Right ventricle myocardium superior (tissue), 1 donor: ENCODE measurements at regions of chr2 and their contacts with region 1.

Region 1: GRCh38 chr2:65432227-65433190 is at the start of gene SPRED2:
- DNase-seq: peak; percentile 96
- ATAC-seq: peak; percentile 68
- total RNA-seq, gene SPRED2: 14.9 TPM

Region 2: DNA sequence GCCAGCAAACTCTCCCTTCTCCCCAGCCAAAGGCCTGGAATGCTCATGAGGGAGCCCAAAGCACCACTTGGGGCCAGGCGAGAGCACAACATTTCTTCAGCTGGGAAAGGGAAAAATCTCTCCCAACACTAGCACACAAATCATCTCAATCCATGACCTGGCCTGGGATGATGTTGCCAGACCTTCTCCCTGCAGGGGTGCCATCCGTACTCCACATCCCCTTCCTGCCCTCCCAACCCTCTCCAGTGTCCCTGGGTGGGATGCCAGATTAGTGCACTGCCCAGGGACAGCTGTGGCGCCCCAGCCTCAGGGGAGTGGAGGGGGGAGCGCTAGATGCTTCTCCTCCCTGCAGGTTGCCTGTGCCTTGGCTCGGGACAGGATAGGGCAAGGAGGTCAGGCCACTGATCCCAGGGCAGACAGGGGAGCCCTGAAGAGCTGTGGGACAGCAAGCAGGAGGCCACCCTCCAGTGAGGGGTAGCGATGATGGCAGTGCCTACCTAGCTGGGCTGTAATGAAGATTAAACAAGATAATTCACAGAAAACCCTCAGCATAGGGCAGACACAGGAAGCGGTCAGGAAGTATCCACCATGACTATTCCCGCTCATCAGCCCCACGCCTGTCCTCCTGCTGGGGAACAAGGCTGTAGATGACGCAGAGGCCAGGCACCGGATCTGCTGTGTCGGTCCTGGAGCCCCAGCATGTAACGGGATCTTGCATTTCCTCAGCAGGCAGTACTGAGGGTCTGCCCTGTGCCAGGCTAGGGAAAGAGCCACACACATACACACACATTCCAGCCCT is 809.9 kb before region 1 on chr2:
- intact Hi-C with region 1: no loop called
- DNase-seq: no peak
- ATAC-seq: no peak

Region 3: DNA sequence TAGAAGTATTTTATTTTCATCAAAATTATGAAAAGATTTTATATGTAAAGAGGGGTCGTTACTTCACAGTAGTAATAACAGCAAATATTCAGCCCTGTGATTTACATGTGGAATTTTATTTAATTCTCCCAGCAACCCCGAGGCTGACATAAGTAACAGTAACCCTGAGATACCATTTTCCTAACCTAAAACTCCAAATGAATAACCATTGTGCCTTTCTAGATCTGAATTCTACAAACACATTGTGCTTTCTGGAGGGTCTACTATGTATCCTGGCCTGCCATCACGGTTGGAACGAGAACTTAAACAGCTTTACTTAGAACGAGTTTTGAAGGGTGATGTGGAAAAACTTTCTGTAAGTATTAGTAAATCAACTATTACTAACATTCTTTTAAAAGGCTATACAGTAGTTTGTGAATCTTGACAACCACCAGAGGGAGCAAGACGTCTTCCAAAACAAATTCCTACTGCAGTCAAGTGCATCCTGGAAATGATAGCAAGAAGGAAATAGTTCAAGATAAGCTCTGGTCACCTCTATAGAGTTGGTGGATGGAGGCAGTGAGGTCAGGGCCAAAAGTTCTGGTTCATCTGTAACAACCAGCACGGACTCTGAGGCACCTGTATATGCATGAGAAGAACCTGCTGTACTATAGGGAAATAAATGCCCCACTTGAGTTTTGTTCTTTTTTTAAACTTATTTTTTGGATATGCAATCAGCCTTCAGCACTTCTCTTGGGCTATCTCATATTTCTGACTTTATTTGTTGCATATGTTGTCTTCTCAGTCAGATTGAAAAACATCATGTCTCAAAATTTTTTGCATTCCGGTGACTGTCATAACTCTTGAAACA is 167.5 kb before region 1 on chr2:
- intact Hi-C with region 1: loop called (anchors 2 kb)
- DNase-seq: no peak
- ATAC-seq: peak; percentile 85

Region 4: GRCh38 chr2:65309708-65310107 is 122.8 kb before region 1 on chr2:
- intact Hi-C with region 1: loop called (anchors 5 kb)
- DNase-seq: no peak
- ATAC-seq: no peak

Region 5: DNA sequence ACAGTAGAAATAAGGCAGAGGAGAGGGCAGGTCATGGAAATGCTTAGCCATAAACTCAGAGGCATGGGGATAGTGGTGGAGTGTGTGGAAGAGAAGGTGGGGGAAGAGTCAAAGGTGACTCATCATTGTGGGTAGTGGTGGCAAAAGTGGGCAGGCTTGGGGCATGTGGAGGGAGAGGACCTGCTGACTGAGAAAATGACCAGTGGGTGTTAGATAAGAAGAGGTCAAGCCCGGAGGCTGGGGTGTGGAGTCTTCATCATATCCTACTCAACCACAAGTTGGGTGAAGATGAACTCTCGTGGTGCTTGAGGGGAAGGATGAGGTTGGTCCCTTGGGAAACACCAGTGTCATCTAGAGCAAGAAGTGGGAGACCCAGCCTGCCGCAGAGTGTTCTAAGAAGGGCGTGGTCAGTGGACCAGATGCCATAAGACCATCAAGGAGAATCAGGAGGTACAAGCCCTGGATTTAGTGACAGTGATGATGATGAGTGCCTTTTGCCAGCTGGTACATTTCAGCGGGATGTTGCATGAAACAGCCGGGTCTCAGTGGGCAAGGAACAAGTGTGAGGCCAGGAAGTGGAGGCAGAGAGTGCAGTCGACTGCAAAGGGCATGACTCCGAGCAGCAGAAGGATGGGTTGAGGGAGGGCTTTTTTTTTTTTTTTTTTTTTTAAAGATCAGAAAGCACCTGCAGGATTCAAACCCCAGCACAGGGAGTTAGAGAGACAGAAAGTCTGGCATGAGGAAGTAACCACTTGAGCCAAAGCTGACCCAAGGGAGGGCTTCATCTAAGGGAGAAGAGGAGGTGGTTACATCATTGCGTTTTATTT is 122.5 kb after region 1 on chr2:
- intact Hi-C with region 1: loop called (anchors 5 kb)
- DNase-seq: no peak
- ATAC-seq: no peak